Activated CD4-positive, alpha-beta T cell treated with anti-CD3 and anti-CD28 coated beads, Interleukin-2, amount 10 ng/mL, durations not matched to agents 24 days and 14 days (primary cell): ENCODE measurements at regions of chr19 and their contacts with region 1.

Region 1: GRCh38 chr19:6424939-6425731 is 524 bp upstream of the KHSRP start:
- DNase-seq: peak; percentile 100
- H3K4me3 Mint-ChIP-seq: peak overlapping the region; percentile 72
- H3K27ac Mint-ChIP-seq: peak overlapping the region; percentile 97
- H3K4me1 Mint-ChIP-seq: peaks cover 26% of the 10 kb centered on the region
- H3K27me3 Mint-ChIP-seq: no peaks in the 10 kb centered on the region

Region 2: GRCh38 chr19:6372594-6373095 is 52.5 kb before region 1 on chr19 and contains the start of gene ALKBH7:
- intact Hi-C with region 1: loop called (anchors 1 kb)
- DNase-seq: peak; percentile 99
- H3K4me3 Mint-ChIP-seq: peak within 1 kb of the TSS; percentile 92
- H3K27ac Mint-ChIP-seq: peak within 1 kb of the TSS; percentile 94
- H3K4me1 Mint-ChIP-seq: peaks cover 11% of the 10 kb centered on the region
- H3K27me3 Mint-ChIP-seq: no peaks in the 10 kb centered on the region
- total RNA-seq, gene ALKBH7: 23.9 and 25.0 TPM in 2 replicates

Region 3: GRCh38 chr19:6460101-6460853 is 35.1 kb after region 1 on chr19:
- intact Hi-C with region 1: loop called (anchors 1 kb)
- DNase-seq: peak; percentile 99
- H3K4me3 Mint-ChIP-seq: peak overlapping the region; percentile 93
- H3K27ac Mint-ChIP-seq: peak overlapping the region; percentile 84
- H3K4me1 Mint-ChIP-seq: peaks cover 17% of the 10 kb centered on the region
- H3K27me3 Mint-ChIP-seq: no peaks in the 10 kb centered on the region

Region 4: GRCh38 chr19:6590827-6591319 is 165.7 kb after region 1 on chr19 and contains the start of gene CD70:
- intact Hi-C with region 1: loop called (anchors 10 kb)
- DNase-seq: peak; percentile 89
- H3K4me3 Mint-ChIP-seq: peak within 1 kb of the TSS; percentile 91
- H3K27ac Mint-ChIP-seq: peak within 1 kb of the TSS; percentile 79
- H3K4me1 Mint-ChIP-seq: peaks cover 60% of the 10 kb centered on the region
- H3K27me3 Mint-ChIP-seq: peaks cover 44% of the 10 kb centered on the region
- total RNA-seq, gene CD70: 46.8 and 47.4 TPM in 2 replicates